Naive thymus-derived CD4-positive, alpha-beta T cell (primary cell): ENCODE measurements at regions of chrX and their contacts with region 1.

Region 1: DNA sequence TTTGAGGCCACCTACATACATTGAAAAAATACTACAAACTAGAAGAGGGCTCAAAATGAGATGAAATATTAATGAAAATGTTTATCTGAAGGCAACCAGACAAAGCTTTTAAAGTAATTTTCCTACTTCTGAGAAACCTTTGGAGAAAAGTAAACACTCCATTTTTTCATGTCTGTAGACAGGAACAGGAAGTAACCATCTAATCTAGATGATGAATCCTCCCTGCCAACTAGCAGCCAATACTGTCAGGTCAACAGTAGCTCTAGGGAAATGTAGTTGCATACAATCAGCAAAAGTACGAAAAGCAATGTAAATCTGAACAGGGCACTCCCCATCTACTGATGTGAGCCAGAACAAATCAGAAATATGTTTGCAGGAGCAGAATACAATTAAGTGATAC is 49.0 kb downstream of the AMMECR1 start:
- DNase-seq: peak in 1 of 9 donors; percentile 5
- ATAC-seq: no peak
- H3K4me3 ChIP-seq: no peak overlapping the region
- H3K4me3 Mint-ChIP-seq: peak overlapping the region in 4 of 10 donors; percentile 21 to 68 (median 52)
- H3K27ac ChIP-seq: no peak overlapping the region
- H3K27ac Mint-ChIP-seq: peak overlapping the region in 7 of 9 donors; percentile 10 to 90 (median 86)
- H3K4me1 ChIP-seq: peaks cover 0 to 10% of the 10 kb centered on the region in 2 donors
- H3K4me1 Mint-ChIP-seq: peaks cover 17 to 60% (median 33%) of the 10 kb centered on the region in 7 donors
- H3K27me3 ChIP-seq: no peaks in the 10 kb centered on the region
- H3K27me3 Mint-ChIP-seq: no peaks in the 10 kb centered on the region

Region 2: DNA sequence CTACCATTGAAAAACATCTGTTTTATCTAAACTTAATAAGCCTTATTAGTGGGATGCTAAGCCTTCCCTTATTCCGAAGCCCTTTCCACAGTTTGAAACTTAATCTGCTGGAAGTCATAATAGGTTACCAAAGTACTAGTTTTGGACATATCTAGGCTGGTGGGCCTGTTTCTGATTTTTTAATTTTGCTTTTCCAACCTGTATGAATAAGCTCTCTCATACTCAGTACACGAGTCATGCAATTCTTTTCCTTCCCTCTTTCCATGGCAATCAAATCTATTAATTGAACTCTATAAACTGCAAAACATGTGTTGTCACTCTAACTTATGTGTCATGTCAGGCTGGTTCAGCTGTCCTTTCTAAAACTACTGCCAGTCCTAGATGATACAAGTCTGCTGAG is 42.0 kb before region 1 on chrX:
- CTCF ChIA-PET with region 1: interaction called, 3 read pairs
- POLR2A ChIA-PET with region 1: interaction called, 7 read pairs
- intact Hi-C with region 1: loop called in 1 of 2 experiments (anchors 5 kb)
- DNase-seq: no peak
- ATAC-seq: no peak
- H3K4me3 ChIP-seq: no peak overlapping the region
- H3K4me3 Mint-ChIP-seq: no peak overlapping the region
- H3K27ac ChIP-seq: no peak overlapping the region
- H3K27ac Mint-ChIP-seq: peak overlapping the region in 4 of 9 donors; percentile 6 to 90 (median 69)
- H3K4me1 ChIP-seq: peaks cover 6% of the 10 kb centered on the region in 2 donors
- H3K4me1 Mint-ChIP-seq: peaks cover 7 to 52% (median 33%) of the 10 kb centered on the region in 7 donors
- H3K27me3 ChIP-seq: no peaks in the 10 kb centered on the region
- H3K27me3 Mint-ChIP-seq: no peaks in the 10 kb centered on the region

Region 3: GRCh38 chrX:111086591-111087006 is 817.7 kb after region 1 on chrX:
- CTCF ChIA-PET with region 1: no interaction called
- POLR2A ChIA-PET with region 1: no interaction called
- intact Hi-C with region 1: no loop called
- DNase-seq: no peak
- ATAC-seq: no peak
- H3K4me3 ChIP-seq: no peak overlapping the region
- H3K4me3 Mint-ChIP-seq: no peak overlapping the region
- H3K27ac ChIP-seq: no peak overlapping the region
- H3K27ac Mint-ChIP-seq: no peak overlapping the region
- H3K4me1 ChIP-seq: no peaks in the 10 kb centered on the region
- H3K4me1 Mint-ChIP-seq: no peaks in the 10 kb centered on the region
- H3K27me3 ChIP-seq: peaks cover 0 to 2% of the 10 kb centered on the region in 2 donors
- H3K27me3 Mint-ChIP-seq: peaks cover 6 to 17% (median 10%) of the 10 kb centered on the region in 5 donors